Heart right ventricle (tissue), 16 donors: ENCODE measurements at regions of chr3 and their contacts with region 1.

Region 1: GRCh38 chr3:196942226-196942914 is at the start of gene NCBP2:
- DNase-seq: peak; percentile 99
- ATAC-seq: peak; percentile 96 to 98 (median 97)
- H3K4me3 ChIP-seq: peak within 1 kb of the TSS; percentile 64 to 100 (median 95)
- H3K27ac ChIP-seq: peak within 1 kb of the TSS; percentile 67 to 97 (median 92)
- H3K4me1 ChIP-seq: peaks cover 4 to 38% (median 27%) of the 10 kb centered on the region in 9 donors
- H3K27me3 ChIP-seq: no peaks in the 10 kb centered on the region
- CTCF ChIP-seq: peak; percentile 17 to 80 (median 59)
- total RNA-seq, gene NCBP2: 28.3 to 48.1 (median 34.8) TPM

Region 2: GRCh38 chr3:196568246-196569002 is 373.9 kb before region 1 on chr3 and contains the starts of genes FBXO45 and WDR53:
- intact Hi-C with region 1: loop called in 1 of 10 experiments (anchors 10 kb)
- DNase-seq: peak; percentile 94
- ATAC-seq: peak; percentile 99 to 100 (median 99)
- H3K4me3 ChIP-seq: peak within 1 kb of the TSS; percentile 67 to 96 (median 79)
- H3K27ac ChIP-seq: peak within 1 kb of the TSS; percentile 61 to 91 (median 84)
- H3K4me1 ChIP-seq: peaks cover 3 to 54% (median 28%) of the 10 kb centered on the region in 9 donors
- H3K27me3 ChIP-seq: no peaks in the 10 kb centered on the region
- CTCF ChIP-seq: peak in 1 of 9 donors; percentile 3
- total RNA-seq, gene FBXO45: 4.4 to 10.2 (median 5.9) TPM
- total RNA-seq, gene WDR53: 5.8 to 10.8 (median 8.1) TPM

Region 3: GRCh38 chr3:196711838-196712513 is 230.4 kb before region 1 on chr3 and contains the starts of genes CEP19 and PIGX:
- intact Hi-C with region 1: loop called in 1 of 10 experiments (anchors 10 kb)
- DNase-seq: peak; percentile 83 to 89
- ATAC-seq: peak; percentile 97 to 99 (median 98)
- H3K4me3 ChIP-seq: peak within 1 kb of the TSS; percentile 77 to 98 (median 86)
- H3K27ac ChIP-seq: peak within 1 kb of the TSS; percentile 72 to 97 (median 93)
- H3K4me1 ChIP-seq: peaks cover 7 to 23% (median 16%) of the 10 kb centered on the region in 9 donors
- H3K27me3 ChIP-seq: no peaks in the 10 kb centered on the region
- CTCF ChIP-seq: peak in 2 of 9 donors; percentile 22 to 23
- total RNA-seq, gene CEP19: 0.55 to 2.3 (median 0.84) TPM
- total RNA-seq, gene PIGX: 13.9 to 21.9 (median 16.6) TPM

Region 4: GRCh38 chr3:196739671-196740480 is 202.5 kb before region 1 on chr3 and contains the start of gene PAK2:
- intact Hi-C with region 1: loop called in 1 of 10 experiments (anchors 5 kb)
- DNase-seq: peak; percentile 93 to 94
- ATAC-seq: peak; percentile 97 to 99 (median 98)
- H3K4me3 ChIP-seq: peak within 1 kb of the TSS; percentile 82 to 99 (median 91)
- H3K27ac ChIP-seq: peak within 1 kb of the TSS; percentile 96 to 99 (median 98)
- H3K4me1 ChIP-seq: peaks cover 0 to 39% (median 17%) of the 10 kb centered on the region in 9 donors
- H3K27me3 ChIP-seq: no peaks in the 10 kb centered on the region
- CTCF ChIP-seq: peak in 3 of 9 donors; percentile 25 to 37 (median 29)
- total RNA-seq, gene PAK2: 44.0 to 62.2 (median 54.7) TPM

Region 5: GRCh38 chr3:196837819-196838420 is 104.5 kb before region 1 on chr3:
- intact Hi-C with region 1: loop called in 1 of 10 experiments (anchors 10 kb)
- DNase-seq: peak; percentile 39 to 58
- ATAC-seq: peak in 7 of 8 donors; percentile 43 to 81 (median 71)
- H3K4me3 ChIP-seq: no peak overlapping the region
- H3K27ac ChIP-seq: no peak overlapping the region
- H3K4me1 ChIP-seq: no peaks in the 10 kb centered on the region
- H3K27me3 ChIP-seq: no peaks in the 10 kb centered on the region
- CTCF ChIP-seq: peak; percentile 41 to 80 (median 72)

Region 6: GRCh38 chr3:196867507-196868296 is 74.7 kb before region 1 on chr3 and contains the start of gene SENP5:
- intact Hi-C with region 1: loop called in 9 of 10 experiments (anchors 2 to 10 kb)
- DNase-seq: peak; percentile 89 to 92
- ATAC-seq: peak; percentile 98 to 100 (median 99)
- H3K4me3 ChIP-seq: peak within 1 kb of the TSS; percentile 82 to 100 (median 99)
- H3K27ac ChIP-seq: peak within 1 kb of the TSS; percentile 83 to 98 (median 94)
- H3K4me1 ChIP-seq: peaks cover 4 to 43% (median 25%) of the 10 kb centered on the region in 9 donors
- H3K27me3 ChIP-seq: no peaks in the 10 kb centered on the region
- CTCF ChIP-seq: peak in 1 of 9 donors; percentile 6
- total RNA-seq, gene SENP5: 15.2 to 24.9 (median 20.6) TPM

Region 7: DNA sequence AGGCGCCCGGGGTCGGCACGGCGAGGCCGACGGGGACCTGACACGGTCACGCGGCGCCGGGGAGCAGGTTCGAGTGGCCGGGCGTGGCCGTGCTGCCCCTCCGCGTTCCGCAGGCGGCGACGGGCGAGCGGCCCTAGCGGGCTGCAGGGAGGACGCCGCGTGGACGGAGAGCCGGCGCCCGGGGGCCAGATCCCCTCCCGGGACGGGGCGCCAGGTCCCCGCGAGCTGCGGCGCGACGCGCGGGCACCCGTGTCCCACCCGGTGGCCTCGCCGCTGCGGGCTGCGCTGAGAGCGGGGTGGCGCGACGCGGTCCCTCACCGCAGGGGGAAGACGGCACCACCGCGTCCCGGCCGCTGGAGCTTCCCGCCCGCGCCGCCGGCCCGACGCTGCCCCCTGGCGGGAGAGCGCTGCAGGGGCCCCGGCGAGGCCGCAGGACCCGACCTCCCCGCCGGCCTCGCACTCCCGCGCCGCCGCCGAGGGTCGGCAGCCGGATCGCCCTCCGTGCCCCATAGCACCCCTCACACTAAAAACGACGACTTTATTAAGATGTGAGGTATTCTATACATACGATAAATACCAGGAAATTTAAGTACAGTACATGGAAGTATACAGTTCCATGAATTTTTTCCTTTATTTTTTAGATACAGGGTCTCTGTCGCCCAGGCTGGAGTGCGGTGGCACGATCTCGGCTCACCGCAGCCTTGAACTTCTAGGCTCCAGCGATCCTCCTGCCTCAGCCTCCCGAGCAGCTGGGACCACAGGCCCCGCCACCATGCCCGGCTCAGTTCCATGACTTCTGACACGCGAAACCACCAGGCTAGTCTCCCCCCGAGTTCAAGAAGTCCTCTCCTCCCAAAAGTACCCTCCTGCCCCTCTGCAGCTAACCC is 27.5 kb after region 1 on chr3:
- intact Hi-C with region 1: loop called in 1 of 10 experiments (anchors 2 kb)
- DNase-seq: peak; percentile 27 to 74
- ATAC-seq: peak in 7 of 8 donors; percentile 64 to 89 (median 82)
- H3K4me3 ChIP-seq: peak overlapping the region; percentile 77 to 99 (median 87)
- H3K27ac ChIP-seq: peak overlapping the region in 8 of 10 donors; percentile 77 to 90 (median 86)
- H3K4me1 ChIP-seq: peaks cover 5 to 18% (median 11%) of the 10 kb centered on the region in 9 donors
- H3K27me3 ChIP-seq: no peaks in the 10 kb centered on the region
- CTCF ChIP-seq: peak; percentile 49 to 98 (median 85)

Region 8: DNA sequence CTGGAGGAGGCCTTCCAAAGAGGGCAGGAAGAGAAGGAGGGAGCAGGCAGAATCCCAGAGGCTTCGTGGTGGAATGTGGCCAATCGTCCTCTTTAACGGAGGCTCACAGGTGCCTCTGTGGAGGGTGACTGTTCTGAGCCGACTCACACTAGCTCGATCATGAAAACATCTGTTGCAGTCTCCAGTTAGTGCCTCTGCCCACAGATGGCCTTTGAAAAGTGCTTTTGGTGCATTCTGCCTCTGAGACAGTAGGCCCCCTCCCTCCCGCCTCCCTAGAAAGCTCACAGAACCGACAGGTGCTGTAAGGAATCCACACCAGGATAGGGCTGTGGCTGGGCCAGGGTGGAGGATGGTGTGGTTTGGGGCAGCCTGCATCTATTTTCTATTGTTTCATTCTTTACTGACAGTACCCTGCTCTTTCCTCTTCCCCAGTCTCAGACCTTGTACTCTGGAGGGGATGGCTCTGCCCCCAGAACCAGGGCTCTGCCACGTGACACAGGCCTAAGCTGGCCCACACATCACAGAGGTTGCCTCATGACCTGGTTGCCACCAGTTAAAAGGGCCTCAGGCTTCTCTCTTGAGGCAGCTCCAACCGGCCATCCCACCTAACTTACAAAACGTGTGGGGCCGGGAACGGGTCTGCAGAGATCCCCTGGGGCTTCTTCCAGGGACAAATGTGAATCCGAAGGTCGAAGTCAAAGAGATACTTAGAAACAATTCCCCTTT is 53.4 kb after region 1 on chr3:
- intact Hi-C with region 1: no loop called
- DNase-seq: no peak
- ATAC-seq: no peak
- H3K4me3 ChIP-seq: no peak overlapping the region
- H3K27ac ChIP-seq: no peak overlapping the region
- H3K4me1 ChIP-seq: no peaks in the 10 kb centered on the region
- H3K27me3 ChIP-seq: no peaks in the 10 kb centered on the region
- CTCF ChIP-seq: no peak

Region 9: DNA sequence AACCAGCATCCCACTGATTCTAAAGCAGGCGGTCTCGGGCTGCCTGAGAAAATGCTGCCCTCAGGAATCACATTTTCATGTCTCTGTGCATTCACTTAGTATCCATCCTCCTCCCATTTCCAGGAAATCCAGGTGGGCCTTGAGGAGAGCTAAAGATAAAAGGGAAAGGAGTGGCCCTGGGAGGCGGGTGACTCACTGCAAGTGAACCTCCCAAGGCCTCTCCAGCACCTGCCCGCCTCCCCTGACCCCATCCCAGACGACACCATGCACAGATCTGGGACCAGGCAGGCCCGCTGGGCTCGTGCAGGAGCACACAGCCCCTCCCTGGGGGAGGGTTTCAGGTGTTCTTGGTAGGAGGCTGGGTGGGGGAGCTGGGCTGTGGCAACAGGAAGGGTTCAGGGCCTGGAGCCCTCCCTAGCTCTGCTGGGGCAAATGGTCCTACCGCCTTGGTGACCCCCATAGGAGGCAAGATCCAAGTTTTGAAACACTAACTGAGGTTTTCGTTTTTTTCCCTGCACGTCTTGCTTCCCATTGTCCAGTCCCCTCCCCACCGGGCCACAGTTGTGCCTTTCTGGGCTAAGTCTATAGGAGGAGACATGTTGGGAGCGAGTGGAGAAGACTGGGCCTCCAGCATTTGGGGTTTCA is 65.0 kb after region 1 on chr3:
- intact Hi-C with region 1: no loop called
- DNase-seq: no peak
- ATAC-seq: no peak
- H3K4me3 ChIP-seq: no peak overlapping the region
- H3K27ac ChIP-seq: no peak overlapping the region
- H3K4me1 ChIP-seq: peaks cover 0 to 18% (median 7%) of the 10 kb centered on the region in 9 donors
- H3K27me3 ChIP-seq: no peaks in the 10 kb centered on the region
- CTCF ChIP-seq: no peak